ENCODE measurements at regions of chr9 and their contacts with region 1.

Region 1: DNA sequence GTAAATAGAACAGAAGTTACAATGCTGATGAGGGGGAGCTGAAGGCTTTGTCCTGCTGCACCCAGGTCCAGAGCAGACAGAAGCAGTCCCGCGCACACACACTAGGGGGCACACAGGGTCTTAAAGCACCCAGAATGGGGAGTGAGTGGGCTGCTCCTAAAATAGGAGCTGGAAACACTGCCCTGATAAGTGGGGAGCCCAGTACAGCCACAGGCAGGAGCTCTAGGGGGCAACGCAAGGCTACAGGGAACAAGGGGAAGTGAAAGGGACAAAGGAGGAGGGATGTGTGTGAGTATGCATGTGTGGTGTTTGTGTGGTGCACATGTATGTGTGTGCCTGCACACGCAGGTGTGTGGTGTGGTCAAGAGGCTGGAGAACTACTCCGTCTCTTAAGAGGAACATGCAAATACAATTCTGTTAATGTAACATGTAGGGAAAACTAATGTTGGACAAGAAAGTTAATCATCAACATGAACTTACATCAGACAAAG is 191.5 kb downstream of the ROR2 start:
- DNase-seq: peak; percentile 84
- ATAC-seq: peak; percentile 96
- H3K4me3 Mint-ChIP-seq: no peak overlapping the region
- H3K27ac Mint-ChIP-seq: no peak overlapping the region
- H3K4me1 Mint-ChIP-seq: peaks cover 6% of the 10 kb centered on the region
- H3K27me3 Mint-ChIP-seq: no peaks in the 10 kb centered on the region
- CTCF ChIP-seq: peak; percentile 76

Region 2: GRCh38 chr9:91451519-91452270 is 306.8 kb before region 1 on chr9:
- CTCF ChIA-PET with region 1: no interaction called
- POLR2A ChIA-PET with region 1: no interaction called
- DNase-seq: no peak
- ATAC-seq: no peak
- H3K4me3 Mint-ChIP-seq: no peak overlapping the region
- H3K27ac Mint-ChIP-seq: no peak overlapping the region
- H3K4me1 Mint-ChIP-seq: peaks cover 5% of the 10 kb centered on the region
- H3K27me3 Mint-ChIP-seq: no peaks in the 10 kb centered on the region
- CTCF ChIP-seq: no peak

Region 3: DNA sequence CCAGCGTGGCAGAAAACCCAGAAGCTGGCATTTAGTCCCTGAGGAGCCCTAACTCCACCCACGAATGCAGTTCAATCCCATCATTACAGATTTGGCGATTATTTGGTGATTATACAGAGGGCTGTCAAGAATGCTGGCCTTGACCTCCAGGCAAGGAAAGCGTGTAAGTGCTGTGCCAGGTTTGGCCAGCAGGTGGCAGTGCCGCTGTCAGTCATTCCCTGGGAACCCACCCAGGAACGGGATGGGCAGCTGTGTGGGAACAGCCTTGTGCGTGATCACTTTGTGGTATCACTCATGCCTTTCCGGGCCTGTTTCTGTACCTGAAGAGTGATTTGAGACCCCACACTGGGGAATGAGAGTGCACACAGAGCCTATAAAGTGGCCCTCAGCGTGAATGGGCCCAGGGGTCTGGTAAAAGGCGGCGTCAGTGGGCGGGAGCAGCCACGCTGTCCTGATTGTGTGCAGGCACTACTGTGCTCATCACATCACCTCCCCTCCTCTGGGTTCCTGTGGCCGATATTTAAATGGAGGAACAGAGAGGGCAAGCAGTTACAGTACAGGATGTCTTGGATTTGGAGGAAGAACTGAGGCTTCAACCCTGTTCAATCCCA is 24.1 kb before region 1 on chr9:
- CTCF ChIA-PET with region 1: interaction called, 20 read pairs
- POLR2A ChIA-PET with region 1: no interaction called
- DNase-seq: peak; percentile 82
- ATAC-seq: peak; percentile 81
- H3K4me3 Mint-ChIP-seq: no peak overlapping the region
- H3K27ac Mint-ChIP-seq: no peak overlapping the region
- H3K4me1 Mint-ChIP-seq: no peaks in the 10 kb centered on the region
- H3K27me3 Mint-ChIP-seq: no peaks in the 10 kb centered on the region
- CTCF ChIP-seq: peak; percentile 94

Region 4: DNA sequence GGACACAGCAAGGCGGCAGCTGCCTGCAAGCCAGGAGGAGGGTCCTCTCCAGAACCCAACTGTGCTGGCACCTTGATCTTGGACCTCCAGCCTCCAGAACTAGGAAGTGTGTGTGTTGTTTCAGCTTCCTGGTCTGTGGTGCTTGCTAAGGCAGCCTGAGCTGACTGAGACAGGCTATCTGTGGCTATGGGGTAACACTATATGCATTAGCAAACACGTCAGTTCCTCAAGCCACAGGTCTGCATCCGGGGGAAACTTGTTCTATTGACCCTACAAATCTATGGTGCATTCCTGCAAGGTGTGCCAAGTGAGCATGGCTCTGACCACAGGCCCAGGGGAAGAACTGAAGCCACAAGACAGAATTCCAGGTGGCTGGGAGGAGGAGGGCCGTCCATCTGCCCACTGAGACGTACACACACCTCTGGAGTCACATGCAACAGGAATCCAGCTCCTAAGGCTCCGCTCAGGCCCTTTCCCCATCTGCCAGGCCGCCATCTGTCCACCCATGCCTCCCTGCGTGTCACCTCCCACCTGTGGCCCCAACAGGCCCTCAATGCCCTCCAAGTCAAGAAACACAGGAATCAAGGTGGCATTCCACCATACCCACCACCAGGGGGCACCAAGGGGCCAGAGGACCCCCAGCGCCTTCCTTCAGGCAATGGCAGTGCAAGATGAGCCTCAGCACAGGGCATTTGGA is 16.6 kb after region 1 on chr9:
- CTCF ChIA-PET with region 1: interaction called, 16 read pairs
- POLR2A ChIA-PET with region 1: no interaction called
- DNase-seq: peak; percentile 84
- ATAC-seq: peak; percentile 89
- H3K4me3 Mint-ChIP-seq: no peak overlapping the region
- H3K27ac Mint-ChIP-seq: no peak overlapping the region
- H3K4me1 Mint-ChIP-seq: peaks cover 42% of the 10 kb centered on the region
- H3K27me3 Mint-ChIP-seq: no peaks in the 10 kb centered on the region
- CTCF ChIP-seq: peak; percentile 97

Region 5: GRCh38 chr9:91782708-91783214 is 24.2 kb after region 1 on chr9:
- CTCF ChIA-PET with region 1: interaction called, 13 read pairs
- POLR2A ChIA-PET with region 1: no interaction called
- DNase-seq: no peak
- ATAC-seq: no peak
- H3K4me3 Mint-ChIP-seq: no peak overlapping the region
- H3K27ac Mint-ChIP-seq: no peak overlapping the region
- H3K4me1 Mint-ChIP-seq: peaks cover 19% of the 10 kb centered on the region
- H3K27me3 Mint-ChIP-seq: no peaks in the 10 kb centered on the region
- CTCF ChIP-seq: no peak

Region 6: GRCh38 chr9:91972076-91972626 is 213.6 kb after region 1 on chr9:
- CTCF ChIA-PET with region 1: interaction called, 36 read pairs
- POLR2A ChIA-PET with region 1: no interaction called
- DNase-seq: no peak
- ATAC-seq: no peak
- H3K4me3 Mint-ChIP-seq: no peak overlapping the region
- H3K27ac Mint-ChIP-seq: no peak overlapping the region
- H3K4me1 Mint-ChIP-seq: no peaks in the 10 kb centered on the region
- H3K27me3 Mint-ChIP-seq: no peaks in the 10 kb centered on the region; the same call in 1 of the 2 replicates
- CTCF ChIP-seq: no peak

Region 7: DNA sequence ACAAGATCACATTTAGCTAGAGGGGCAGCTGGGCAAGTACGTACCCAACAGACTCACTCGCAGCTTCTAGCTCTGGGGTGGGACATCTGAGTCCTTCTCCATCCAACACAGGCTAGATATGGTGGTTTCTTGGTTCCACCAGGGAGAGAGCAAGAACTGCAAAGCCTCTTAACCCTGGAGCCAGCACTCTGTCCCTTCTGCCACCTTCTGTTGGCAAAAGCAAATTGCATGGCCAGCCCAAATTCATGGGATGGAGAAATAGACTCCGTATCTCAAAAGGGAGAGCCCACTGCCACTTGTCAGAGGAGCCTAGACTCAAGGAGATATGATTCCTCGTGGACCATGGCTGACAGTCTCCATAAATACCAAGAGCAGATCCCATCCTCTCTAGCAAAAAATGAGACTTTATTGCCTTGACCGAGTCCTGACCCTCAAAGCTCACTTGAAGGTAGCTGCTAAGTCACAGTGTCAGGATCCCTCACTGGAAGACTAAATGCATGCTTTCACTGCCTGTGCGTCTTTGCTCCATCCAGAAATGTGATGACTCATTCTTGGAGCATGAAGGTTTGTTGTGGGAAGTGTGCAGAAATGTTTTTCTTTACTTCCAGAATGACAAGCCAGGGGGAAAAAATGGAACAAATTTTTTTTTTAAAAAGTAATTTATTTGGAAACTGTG is 220.3 kb after region 1 on chr9:
- CTCF ChIA-PET with region 1: interaction called, 36 read pairs
- POLR2A ChIA-PET with region 1: no interaction called
- DNase-seq: peak; percentile 53
- ATAC-seq: peak; percentile 97
- H3K4me3 Mint-ChIP-seq: no peak overlapping the region
- H3K27ac Mint-ChIP-seq: no peak overlapping the region
- H3K4me1 Mint-ChIP-seq: peaks cover 9% of the 10 kb centered on the region
- H3K27me3 Mint-ChIP-seq: no peaks in the 10 kb centered on the region; the same call in 1 of the 2 replicates
- CTCF ChIP-seq: peak; percentile 23; the same call in 1 of the 2 replicates

Measured in WTC11 (cell line).